ENCODE measurements at regions of chr13 and their contacts with region 1.

Region 1: DNA sequence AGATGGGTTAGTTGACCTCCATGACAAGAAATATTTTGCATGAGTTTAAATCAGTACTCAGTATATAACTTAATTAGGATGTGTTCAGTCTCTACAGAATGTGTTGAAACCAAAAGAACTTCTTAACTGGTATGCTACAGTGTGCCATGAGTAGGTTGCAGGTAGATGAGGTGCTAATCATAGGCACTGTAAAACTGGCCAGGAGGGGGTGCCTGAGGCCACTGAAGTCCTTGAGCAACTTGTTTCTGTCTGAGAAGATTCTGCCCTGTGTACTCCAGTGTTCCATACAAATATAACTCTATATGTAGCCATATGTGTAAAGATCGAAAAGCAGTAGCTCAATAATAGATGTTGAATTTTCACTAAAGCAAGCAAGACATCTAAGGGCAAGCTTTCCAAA is 549.2 kb upstream of the KLF12 start:
- DNase-seq: peak; percentile 23
- H3K4me3 ChIP-seq: no peak overlapping the region
- H3K27ac ChIP-seq: no peak overlapping the region
- H3K4me1 ChIP-seq: no peaks in the 10 kb centered on the region
- H3K27me3 ChIP-seq: no peaks in the 10 kb centered on the region
- CTCF ChIP-seq: peak; percentile 30 to 53

Region 2: DNA sequence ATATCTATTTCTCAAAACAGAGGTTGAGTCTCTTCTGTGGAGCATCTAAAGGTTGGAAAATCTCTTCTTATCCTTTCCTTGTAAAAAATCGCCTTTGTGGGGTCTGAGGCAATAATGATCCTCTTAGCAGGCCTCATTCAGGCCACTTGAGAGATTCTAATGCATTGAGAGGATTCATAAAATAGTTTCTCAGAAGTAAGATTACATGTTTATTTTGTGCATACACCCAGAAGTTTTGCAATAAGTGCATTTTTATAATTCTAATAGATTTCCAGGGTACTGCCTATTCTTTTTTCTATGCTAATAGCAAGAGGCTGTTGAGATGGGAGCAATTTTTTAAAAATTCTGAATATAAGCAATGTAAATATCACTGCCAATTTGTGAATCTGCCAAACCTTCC is 207.0 kb before region 1 on chr13:
- CTCF ChIA-PET with region 1: no interaction called
- dilution Hi-C with region 1: no loop called
- in situ Hi-C with region 1: no loop called
- intact Hi-C with region 1: no loop called
- DNase-seq: no peak
- H3K4me3 ChIP-seq: no peak overlapping the region
- H3K27ac ChIP-seq: no peak overlapping the region
- H3K4me1 ChIP-seq: no peaks in the 10 kb centered on the region
- H3K27me3 ChIP-seq: peaks cover 2% of the 10 kb centered on the region
- CTCF ChIP-seq: no peak

Region 3: DNA sequence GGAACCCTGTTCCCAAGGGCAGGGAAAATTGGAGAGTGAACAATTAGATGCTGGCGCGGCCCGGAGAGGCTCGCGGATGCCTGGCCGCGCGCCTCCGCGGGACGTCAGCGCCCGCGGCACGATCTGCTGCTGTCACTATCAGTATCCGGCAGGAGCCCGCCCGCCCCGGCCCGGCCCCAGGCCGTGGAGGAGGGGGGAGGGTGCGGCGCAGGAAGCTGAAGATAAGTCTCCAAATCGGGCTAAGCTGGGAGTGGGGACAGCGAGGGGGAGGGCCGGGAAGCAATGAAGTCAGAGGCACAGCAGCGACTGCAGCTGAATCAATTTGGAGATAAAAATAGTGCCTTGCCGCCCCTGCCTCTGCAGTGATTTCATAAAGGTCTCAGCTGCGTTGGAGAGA is 107.7 kb before region 1 on chr13:
- CTCF ChIA-PET with region 1: no interaction called
- dilution Hi-C with region 1: no loop called
- in situ Hi-C with region 1: no loop called
- intact Hi-C with region 1: no loop called
- DNase-seq: peak; percentile 5
- H3K4me3 ChIP-seq: peak overlapping the region; percentile 26 to 36 (median 27)
- H3K27ac ChIP-seq: no peak overlapping the region
- H3K4me1 ChIP-seq: no peaks in the 10 kb centered on the region
- H3K27me3 ChIP-seq: peaks cover 6% of the 10 kb centered on the region
- CTCF ChIP-seq: no peak

Region 4: DNA sequence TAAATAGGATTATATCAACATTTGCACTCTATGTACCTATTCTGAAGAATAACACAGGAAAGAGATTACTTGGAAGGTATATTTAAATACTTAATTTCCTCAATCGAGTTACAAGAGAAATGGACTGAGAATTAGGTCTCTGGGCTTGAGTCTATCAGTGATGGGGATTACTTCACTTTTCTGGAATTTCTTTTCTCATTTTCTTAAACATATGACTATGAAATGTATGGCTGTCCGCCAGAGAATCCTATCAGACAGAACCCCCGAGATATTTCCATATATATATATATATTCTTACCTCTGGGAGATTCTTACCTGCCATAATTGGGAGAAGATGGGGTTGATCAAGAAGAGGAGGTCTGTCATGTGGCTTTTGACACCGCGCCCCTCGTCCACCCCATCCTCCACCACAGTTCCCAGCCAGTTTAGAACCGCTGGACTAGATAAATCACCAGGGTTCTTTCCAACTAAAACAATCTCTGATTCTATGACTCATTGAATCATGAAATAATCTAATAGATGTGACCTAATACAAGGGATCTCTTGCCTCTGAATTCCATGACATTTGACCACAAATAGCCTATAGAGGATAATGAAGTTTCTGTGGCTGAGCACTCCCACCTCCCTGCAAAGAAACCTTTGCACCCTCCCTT is 567.2 kb after region 1 on chr13:
- CTCF ChIA-PET with region 1: no interaction called
- dilution Hi-C with region 1: no loop called
- in situ Hi-C with region 1: no loop called
- intact Hi-C with region 1: loop called (anchors 2 kb)
- DNase-seq: peak; percentile 53
- H3K4me3 ChIP-seq: no peak overlapping the region
- H3K27ac ChIP-seq: no peak overlapping the region
- H3K4me1 ChIP-seq: peaks cover 14% of the 10 kb centered on the region
- H3K27me3 ChIP-seq: peaks cover 8% of the 10 kb centered on the region
- CTCF ChIP-seq: no peak

Measured in mammary epithelial cell (primary cell).